Posterior vena cava (tissue), 2 donors: ENCODE measurements at regions of chr6 and their contacts with region 1.

Region 1: DNA sequence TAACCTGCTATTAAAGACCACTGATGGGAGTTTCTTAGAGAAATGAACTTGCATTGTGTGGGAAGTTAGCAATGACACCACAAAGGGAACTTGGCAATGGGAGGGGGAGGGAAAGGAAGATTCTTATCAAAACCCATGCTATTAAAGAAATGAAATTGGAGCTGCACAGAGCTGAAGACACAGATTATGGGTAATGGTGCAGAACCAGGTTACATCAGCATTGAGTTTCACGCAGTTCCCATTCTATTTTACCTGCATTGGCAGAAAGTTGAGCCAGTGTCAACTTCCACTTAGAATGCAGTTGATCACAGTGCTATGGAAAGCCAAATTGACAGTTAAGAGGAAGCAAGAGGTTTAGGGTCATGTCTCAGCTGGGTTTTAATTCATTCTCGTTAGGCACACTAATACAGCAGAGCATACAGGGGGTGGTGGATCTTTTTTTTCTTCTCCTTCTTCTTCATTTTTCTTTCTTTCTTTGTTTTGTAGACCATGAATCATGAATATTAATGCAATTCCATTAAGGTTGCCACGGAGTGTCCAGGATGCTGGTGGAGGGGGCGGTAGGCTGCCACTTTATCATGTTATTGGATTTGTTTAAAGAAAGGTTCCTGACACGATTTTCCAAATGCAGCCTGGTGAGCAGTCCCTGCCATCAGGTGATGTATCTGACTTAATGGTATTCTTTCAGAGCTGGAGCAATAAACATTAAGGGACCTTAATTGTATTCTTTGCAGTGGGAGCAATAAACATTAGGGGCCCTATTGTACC is 1092.0 kb upstream of the MAP3K7 start:
- DNase-seq: no peak

Region 2: GRCh38 chr6:91879386-91879995 is 200.6 kb after region 1 on chr6:
- intact Hi-C with region 1: loop called in 1 of 2 experiments (anchors 5 kb)
- DNase-seq: no peak